ENCODE measurements at regions of chr2 and their contacts with region 1.

Region 1: GRCh38 chr2:205827809-205828365 is 145.6 kb downstream of the NRP2 start:
- H3K4me3 Mint-ChIP-seq: no peak overlapping the region
- H3K27ac Mint-ChIP-seq: no peak overlapping the region
- H3K4me1 Mint-ChIP-seq: no peaks in the 10 kb centered on the region
- H3K27me3 Mint-ChIP-seq: no peaks in the 10 kb centered on the region

Region 2: DNA sequence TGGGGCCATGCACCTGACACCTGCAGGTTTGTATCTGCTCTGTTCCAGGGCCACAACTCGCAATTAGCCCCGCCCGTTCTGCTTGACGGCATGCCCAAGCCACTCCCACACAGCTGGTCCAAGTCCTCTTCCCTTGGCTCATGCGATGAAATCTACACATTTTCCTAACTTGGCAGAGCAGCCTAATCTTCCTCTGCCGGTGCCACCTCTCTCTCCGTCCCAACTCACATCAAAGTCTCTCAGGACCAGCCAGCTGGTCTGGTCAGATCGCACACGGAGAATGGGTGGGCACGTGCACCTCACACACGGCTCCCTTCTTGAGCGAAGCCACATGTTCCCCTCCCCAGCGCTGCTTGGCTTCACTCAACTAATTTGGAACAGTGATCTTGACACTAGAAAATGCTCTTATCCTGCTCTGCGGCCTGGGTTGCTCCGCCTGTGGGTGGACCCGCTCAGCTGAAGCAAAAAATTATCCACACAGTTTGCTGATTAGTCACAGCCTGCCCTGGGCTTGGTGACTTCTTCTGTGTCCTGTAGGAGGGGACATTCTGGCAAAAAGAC is 31.1 kb after region 1 on chr2:
- intact Hi-C with region 1: loop called (anchors 1 kb)
- H3K4me3 Mint-ChIP-seq: no peak overlapping the region
- H3K27ac Mint-ChIP-seq: no peak overlapping the region
- H3K4me1 Mint-ChIP-seq: no peaks in the 10 kb centered on the region
- H3K27me3 Mint-ChIP-seq: peaks cover 7% of the 10 kb centered on the region